ENCODE measurements at regions of chr2 and their contacts with region 1.

Region 1: GRCh38 chr2:232327105-232328041 is 51.2 kb upstream of the ALPP start:
- DNase-seq: peak; percentile 77 to 99
- H3K4me3 ChIP-seq: no peak overlapping the region
- H3K27ac ChIP-seq: no peak overlapping the region
- H3K4me1 ChIP-seq: peaks cover 0 to 18% (median 10%) of the 10 kb centered on the region in 4 experiments; a peak in 6 of 7 replicates
- H3K27me3 ChIP-seq: no peaks in the 10 kb centered on the region
- CTCF ChIP-seq: peak in 2 of 3 experiments; percentile 88 to 90; a peak in 3 of 4 replicates
- EP300 ChIP-seq: no peak
- POLR2A ChIP-seq: no peak
- RAD21 ChIP-seq: peak; percentile 78 to 82

Region 2: DNA sequence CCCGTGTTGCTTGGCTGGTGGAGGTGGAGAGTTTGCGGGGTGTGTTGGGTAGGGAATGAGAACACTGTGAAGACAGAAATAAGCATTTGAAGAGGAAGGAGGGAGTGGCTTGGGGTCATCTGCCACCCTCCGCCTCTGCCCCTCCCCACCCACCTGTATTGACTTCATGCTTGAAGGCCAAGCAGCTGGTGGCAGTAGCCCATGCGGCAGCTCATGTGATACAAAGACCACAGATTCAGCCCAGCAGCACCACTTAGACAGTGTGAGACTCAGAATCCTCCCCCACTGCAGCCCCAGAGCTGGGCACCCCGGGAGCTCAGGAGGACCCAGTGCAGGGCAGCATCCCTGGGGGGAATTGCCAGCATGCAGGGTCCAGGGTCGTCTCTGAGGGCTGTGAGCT is 416.6 kb before region 1 on chr2:
- CTCF ChIA-PET with region 1: interaction called, 23 read pairs
- POLR2A ChIA-PET with region 1: no interaction called
- DNase-seq: no peak
- H3K4me3 ChIP-seq: no peak overlapping the region
- H3K27ac ChIP-seq: no peak overlapping the region
- H3K4me1 ChIP-seq: peaks cover 0 to 6% (median under 1%) of the 10 kb centered on the region in 4 experiments; a peak in 1 of 7 replicates
- H3K27me3 ChIP-seq: no peaks in the 10 kb centered on the region
- CTCF ChIP-seq: no peak
- EP300 ChIP-seq: no peak
- POLR2A ChIP-seq: no peak
- RAD21 ChIP-seq: no peak

Region 3: GRCh38 chr2:232113821-232114220 is 213.6 kb before region 1 on chr2:
- CTCF ChIA-PET with region 1: interaction called, 20 read pairs
- POLR2A ChIA-PET with region 1: no interaction called
- DNase-seq: no peak
- H3K4me3 ChIP-seq: no peak overlapping the region
- H3K27ac ChIP-seq: no peak overlapping the region
- H3K4me1 ChIP-seq: peaks cover 0 to 2% (median 0%) of the 10 kb centered on the region in 4 experiments; a peak in 3 of 7 replicates
- H3K27me3 ChIP-seq: no peaks in the 10 kb centered on the region
- CTCF ChIP-seq: no peak
- EP300 ChIP-seq: no peak
- POLR2A ChIP-seq: no peak
- RAD21 ChIP-seq: no peak

Region 4: DNA sequence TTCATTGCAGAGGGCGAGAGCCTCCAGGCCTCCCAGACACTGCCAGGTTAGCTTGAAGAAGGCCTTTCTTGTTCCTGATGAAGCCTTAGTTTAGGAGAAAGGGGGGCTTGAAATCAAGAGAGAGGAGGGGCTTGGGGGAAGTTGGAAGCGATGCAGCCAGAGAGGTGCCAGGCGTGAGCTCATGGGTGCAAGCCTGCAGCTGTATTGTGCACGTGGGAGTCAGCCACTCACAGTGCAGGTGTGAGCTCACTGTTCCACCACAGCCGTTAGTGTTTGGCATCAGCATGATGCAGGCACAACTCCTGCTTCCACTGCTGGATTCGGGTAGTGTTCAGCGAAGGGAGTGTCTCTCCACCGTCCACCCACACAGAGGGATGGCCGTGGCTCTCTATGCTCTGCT is 17.3 kb before region 1 on chr2:
- CTCF ChIA-PET with region 1: interaction called, 46 read pairs
- POLR2A ChIA-PET with region 1: no interaction called
- DNase-seq: no peak
- H3K4me3 ChIP-seq: no peak overlapping the region
- H3K27ac ChIP-seq: no peak overlapping the region
- H3K4me1 ChIP-seq: no peaks in the 10 kb centered on the region
- H3K27me3 ChIP-seq: no peaks in the 10 kb centered on the region
- CTCF ChIP-seq: no peak
- EP300 ChIP-seq: no peak
- POLR2A ChIP-seq: no peak
- RAD21 ChIP-seq: no peak

Region 5: DNA sequence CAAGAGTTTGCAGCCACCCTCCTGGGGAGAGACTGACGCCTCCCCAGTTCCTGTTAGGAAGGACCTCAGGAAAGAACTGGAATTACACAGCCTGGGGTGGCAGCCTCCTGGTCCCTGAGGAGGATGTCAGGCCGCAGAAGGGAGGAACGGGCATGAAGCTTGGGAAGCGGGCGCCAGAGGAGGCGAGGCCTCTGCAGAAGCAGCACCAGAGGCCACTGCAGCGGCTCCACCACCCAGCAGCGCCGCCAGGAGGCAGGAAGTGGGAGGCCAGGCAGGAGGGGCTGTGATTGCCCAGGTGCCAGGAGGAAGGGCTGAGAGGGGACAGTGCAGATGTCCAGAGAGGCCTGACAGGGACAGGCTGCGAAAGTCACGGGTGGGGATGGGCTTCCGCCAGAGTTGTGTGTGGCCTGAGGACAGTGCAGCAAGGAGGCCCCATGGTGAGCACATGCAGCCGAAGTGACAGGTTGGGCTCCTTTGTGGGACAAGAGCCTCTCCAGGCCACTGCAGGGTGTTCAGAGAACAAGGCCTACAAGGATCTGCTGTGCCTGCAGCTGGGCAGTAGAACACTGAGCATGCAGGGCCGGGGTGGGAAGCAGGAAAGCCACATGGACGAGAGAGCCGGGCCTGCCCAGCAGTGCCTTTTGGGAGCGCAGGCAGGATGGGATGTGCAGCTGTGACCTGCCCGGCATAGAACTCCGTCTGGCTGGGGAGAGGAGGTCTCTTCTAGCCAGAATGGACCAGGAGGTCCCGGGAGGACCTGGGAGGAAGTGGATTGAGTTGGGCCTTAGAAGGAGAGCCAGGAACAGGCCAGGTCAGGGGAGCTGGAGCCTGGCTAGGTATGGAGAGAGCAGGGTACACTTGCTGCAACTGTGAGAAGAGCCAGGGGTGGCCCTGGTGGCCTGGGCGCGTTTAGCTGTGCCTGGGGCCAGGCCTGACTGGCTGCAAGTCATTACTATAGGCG is 12.0 kb after region 1 on chr2:
- CTCF ChIA-PET with region 1: interaction called, 27 read pairs
- POLR2A ChIA-PET with region 1: interaction called, 5 read pairs
- DNase-seq: peak in 1 of 2 experiments; percentile 89
- H3K4me3 ChIP-seq: no peak overlapping the region
- H3K27ac ChIP-seq: no peak overlapping the region
- H3K4me1 ChIP-seq: no peaks in the 10 kb centered on the region; a peak in 1 of 7 replicates
- H3K27me3 ChIP-seq: no peaks in the 10 kb centered on the region
- CTCF ChIP-seq: peak in 2 of 3 experiments; percentile 82 to 87; a peak in 3 of 4 replicates
- EP300 ChIP-seq: no peak
- POLR2A ChIP-seq: no peak
- RAD21 ChIP-seq: peak; percentile 54 to 62

Region 6: GRCh38 chr2:232348936-232349335 is 21.6 kb after region 1 on chr2:
- CTCF ChIA-PET with region 1: interaction called, 13 read pairs
- POLR2A ChIA-PET with region 1: no interaction called
- DNase-seq: peak in 1 of 2 experiments; percentile 33
- H3K4me3 ChIP-seq: no peak overlapping the region
- H3K27ac ChIP-seq: no peak overlapping the region
- H3K4me1 ChIP-seq: peaks cover 0 to 4% (median 2%) of the 10 kb centered on the region in 4 experiments; a peak in 3 of 7 replicates
- H3K27me3 ChIP-seq: peaks cover 25 to 47% (median 33%) of the 10 kb centered on the region in 4 experiments; a peak in 6 of 7 replicates
- CTCF ChIP-seq: no peak
- EP300 ChIP-seq: no peak
- POLR2A ChIP-seq: no peak
- RAD21 ChIP-seq: no peak

Region 7: GRCh38 chr2:232432598-232433184 is 105.3 kb after region 1 on chr2:
- CTCF ChIA-PET with region 1: interaction called, 35 read pairs
- POLR2A ChIA-PET with region 1: no interaction called
- DNase-seq: peak in 1 of 2 experiments; percentile 87
- H3K4me3 ChIP-seq: no peak overlapping the region
- H3K27ac ChIP-seq: peak overlapping the region; percentile 27; the same call in 1 of the 2 replicates
- H3K4me1 ChIP-seq: peaks cover 0 to 9% (median 7%) of the 10 kb centered on the region in 4 experiments; a peak in 6 of 7 replicates
- H3K27me3 ChIP-seq: peaks cover 0 to 2% (median 0%) of the 10 kb centered on the region in 4 experiments; a peak in 1 of 7 replicates
- CTCF ChIP-seq: peak in 2 of 3 experiments; percentile 50 to 78; a peak in 2 of 4 replicates
- EP300 ChIP-seq: no peak
- POLR2A ChIP-seq: no peak
- RAD21 ChIP-seq: peak; percentile 24 to 42; a peak in 3 of 4 replicates

Region 8: GRCh38 chr2:232795920-232796319 is 468.5 kb after region 1 on chr2:
- CTCF ChIA-PET with region 1: no interaction called
- POLR2A ChIA-PET with region 1: no interaction called
- DNase-seq: no peak
- H3K4me3 ChIP-seq: no peak overlapping the region
- H3K27ac ChIP-seq: no peak overlapping the region
- H3K4me1 ChIP-seq: peaks cover 0 to 5% (median 0%) of the 10 kb centered on the region in 4 experiments; a peak in 1 of 7 replicates
- H3K27me3 ChIP-seq: no peaks in the 10 kb centered on the region
- CTCF ChIP-seq: no peak
- EP300 ChIP-seq: no peak
- POLR2A ChIP-seq: no peak
- RAD21 ChIP-seq: no peak

Measured in H1 (cell line).